ENCODE measurements at regions of chr3 and their contacts with region 1.

Region 1: DNA sequence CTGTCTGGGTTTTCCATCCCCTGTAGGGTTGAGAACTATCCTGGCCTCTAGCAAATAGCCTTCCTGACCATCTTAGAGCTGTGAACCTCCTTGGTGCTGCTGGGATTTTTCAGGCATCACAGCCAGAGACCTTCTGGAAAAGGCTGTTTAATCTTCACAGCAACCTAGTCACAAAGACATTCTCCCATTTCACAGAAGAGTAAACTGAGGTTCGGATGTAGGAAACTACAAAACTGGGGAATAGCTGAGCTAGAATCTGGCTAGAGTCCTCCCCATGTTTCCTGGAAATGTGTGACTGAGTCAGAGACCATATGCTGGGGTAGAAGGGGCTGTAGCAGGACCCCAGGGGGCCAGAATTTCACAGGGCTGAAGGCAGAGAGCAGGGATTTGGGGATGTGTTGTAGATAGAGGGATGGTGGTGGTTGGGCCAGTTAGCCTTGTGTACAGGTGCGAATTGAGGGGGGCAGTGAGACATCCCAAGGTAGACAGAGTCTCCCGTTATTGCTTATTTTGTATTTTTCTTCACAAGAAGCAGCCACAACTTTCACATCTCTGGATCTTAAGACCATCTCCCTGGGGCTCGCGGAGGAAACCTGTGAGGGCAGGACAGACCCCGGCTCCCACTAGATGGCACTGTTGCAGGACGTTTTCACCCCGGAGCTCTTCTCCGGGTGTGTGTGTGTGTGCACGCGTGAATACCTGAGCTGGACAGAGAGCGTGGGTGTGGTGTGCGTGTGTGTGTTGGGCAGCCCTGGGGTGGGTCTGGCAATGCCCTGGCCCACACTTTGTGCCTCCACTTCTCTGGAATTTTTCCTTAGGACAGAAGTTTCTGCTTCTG is 66.9 kb upstream of the PRR23C start:
- DNase-seq: peak; percentile 65
- H3K27ac ChIP-seq: no peak overlapping the region
- CTCF ChIP-seq: peak; percentile 67

Region 2: GRCh38 chr3:139202226-139202958 is 90.8 kb after region 1 on chr3:
- CTCF ChIA-PET with region 1: interaction called, 12 read pairs
- POLR2A ChIA-PET with region 1: no interaction called
- DNase-seq: peak; percentile 28
- H3K27ac ChIP-seq: no peak overlapping the region
- CTCF ChIP-seq: no peak

Region 3: GRCh38 chr3:139329345-139329850 is 217.8 kb after region 1 on chr3:
- CTCF ChIA-PET with region 1: interaction called, 41 read pairs
- POLR2A ChIA-PET with region 1: no interaction called
- DNase-seq: peak; percentile 92
- H3K27ac ChIP-seq: no peak overlapping the region
- CTCF ChIP-seq: peak; percentile 96

Measured in RWPE1 (cell line).